Mammary epithelial cell (primary cell): ENCODE measurements at regions of chr3 and their contacts with region 1.

Region 1: GRCh38 chr3:102529452-102529851 is 94.6 kb downstream of the ZPLD1 start:
- DNase-seq: peak; percentile 15
- H3K4me3 ChIP-seq: no peak overlapping the region
- H3K27ac ChIP-seq: no peak overlapping the region
- H3K4me1 ChIP-seq: peaks cover 9% of the 10 kb centered on the region
- H3K27me3 ChIP-seq: no peaks in the 10 kb centered on the region
- CTCF ChIP-seq: peak; percentile 27 to 57

Region 2: GRCh38 chr3:101809178-101810021 is 720.1 kb before region 1 on chr3:
- CTCF ChIA-PET with region 1: no interaction called
- dilution Hi-C with region 1: loop called (anchors 25 kb)
- in situ Hi-C with region 1: loop called (anchors 5 to 25 kb)
- intact Hi-C with region 1: no loop called
- DNase-seq: no peak
- H3K4me3 ChIP-seq: no peak overlapping the region
- H3K27ac ChIP-seq: no peak overlapping the region
- H3K4me1 ChIP-seq: peaks cover 5% of the 10 kb centered on the region
- H3K27me3 ChIP-seq: no peaks in the 10 kb centered on the region
- CTCF ChIP-seq: peak; percentile 59 to 60

Region 3: GRCh38 chr3:102332205-102332604 is 197.2 kb before region 1 on chr3:
- CTCF ChIA-PET with region 1: no interaction called
- dilution Hi-C with region 1: no loop called
- in situ Hi-C with region 1: no loop called
- intact Hi-C with region 1: loop called (anchors 5 kb)
- DNase-seq: peak; percentile 55
- H3K4me3 ChIP-seq: no peak overlapping the region
- H3K27ac ChIP-seq: no peak overlapping the region
- H3K4me1 ChIP-seq: peaks cover 3% of the 10 kb centered on the region
- H3K27me3 ChIP-seq: no peaks in the 10 kb centered on the region
- CTCF ChIP-seq: no peak